Activated CD4-positive, alpha-beta T cell treated with anti-CD3 and anti-CD28 coated beads for 36 hours (primary cell): ENCODE measurements at regions of chr21 and their contacts with region 1.

Region 1: GRCh38 chr21:41121785-41122421 is 46.1 kb upstream of the BACE2 start:
- DNase-seq: peak; percentile 83
- ATAC-seq: no peak
- H3K4me3 Mint-ChIP-seq: no peak overlapping the region
- H3K27ac Mint-ChIP-seq: no peak overlapping the region
- H3K4me1 Mint-ChIP-seq: no peaks in the 10 kb centered on the region
- H3K27me3 Mint-ChIP-seq: peaks cover 5% of the 10 kb centered on the region

Region 2: GRCh38 chr21:41460578-41461527 is 338.9 kb after region 1 on chr21:
- CTCF ChIA-PET with region 1: no interaction called
- POLR2A ChIA-PET with region 1: no interaction called
- intact Hi-C with region 1: loop called in 1 of 2 experiments (anchors 2 kb)
- DNase-seq: peak; percentile 77
- ATAC-seq: peak; percentile 79
- H3K4me3 Mint-ChIP-seq: no peak overlapping the region
- H3K27ac Mint-ChIP-seq: no peak overlapping the region
- H3K4me1 Mint-ChIP-seq: peaks cover 2% of the 10 kb centered on the region
- H3K27me3 Mint-ChIP-seq: no peaks in the 10 kb centered on the region